ENCODE measurements at regions of chr10 and their contacts with region 1.

Region 1: GRCh38 chr10:87734987-87735827 is 75.5 kb downstream of the PAPSS2 start:
- DNase-seq: no peak
- H3K4me3 ChIP-seq: no peak overlapping the region
- H3K27ac ChIP-seq: peak overlapping the region; percentile 20
- H3K4me1 ChIP-seq: no peaks in the 10 kb centered on the region
- H3K27me3 ChIP-seq: no peaks in the 10 kb centered on the region
- CTCF ChIP-seq: peak; percentile 28 to 77 (median 51)
- POLR2A ChIP-seq: no peak

Region 2: DNA sequence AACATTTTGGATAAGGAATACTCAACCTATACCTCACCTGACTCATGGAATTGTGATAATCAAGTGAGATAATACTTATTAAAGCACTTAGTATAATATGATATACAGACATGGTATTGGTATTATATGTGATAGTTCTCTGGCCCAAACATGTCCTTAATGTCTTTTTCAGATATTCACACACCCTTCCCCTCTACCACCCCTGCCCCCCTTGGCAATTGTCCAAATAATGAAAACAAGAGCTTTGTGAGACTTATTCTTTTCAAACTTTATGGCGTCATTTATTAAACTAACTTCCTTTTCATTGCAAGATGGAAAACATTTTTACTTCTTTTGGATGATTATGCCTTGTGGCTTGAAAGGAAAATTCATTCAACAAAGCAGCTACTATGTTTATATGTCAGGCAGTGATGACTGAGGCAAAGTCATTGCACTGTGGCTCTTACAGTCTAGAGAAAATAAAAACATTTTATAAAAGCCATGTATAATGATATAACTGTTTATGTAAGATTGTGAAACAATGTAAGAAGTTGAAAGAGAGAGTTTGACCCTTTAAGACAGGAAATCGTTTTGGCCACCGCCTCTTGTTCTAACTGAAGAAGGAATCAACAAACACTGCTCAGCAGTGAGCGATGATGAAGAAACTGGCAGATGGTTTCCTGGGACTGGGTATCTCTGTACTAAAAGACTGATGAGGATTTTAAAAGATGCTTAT is 203.1 kb before region 1 on chr10:
- intact Hi-C with region 1: loop called (anchors 10 kb)
- DNase-seq: no peak
- H3K4me3 ChIP-seq: no peak overlapping the region
- H3K27ac ChIP-seq: peak overlapping the region; percentile 62
- H3K4me1 ChIP-seq: no peaks in the 10 kb centered on the region
- H3K27me3 ChIP-seq: no peaks in the 10 kb centered on the region
- CTCF ChIP-seq: no peak
- POLR2A ChIP-seq: no peak

Region 3: DNA sequence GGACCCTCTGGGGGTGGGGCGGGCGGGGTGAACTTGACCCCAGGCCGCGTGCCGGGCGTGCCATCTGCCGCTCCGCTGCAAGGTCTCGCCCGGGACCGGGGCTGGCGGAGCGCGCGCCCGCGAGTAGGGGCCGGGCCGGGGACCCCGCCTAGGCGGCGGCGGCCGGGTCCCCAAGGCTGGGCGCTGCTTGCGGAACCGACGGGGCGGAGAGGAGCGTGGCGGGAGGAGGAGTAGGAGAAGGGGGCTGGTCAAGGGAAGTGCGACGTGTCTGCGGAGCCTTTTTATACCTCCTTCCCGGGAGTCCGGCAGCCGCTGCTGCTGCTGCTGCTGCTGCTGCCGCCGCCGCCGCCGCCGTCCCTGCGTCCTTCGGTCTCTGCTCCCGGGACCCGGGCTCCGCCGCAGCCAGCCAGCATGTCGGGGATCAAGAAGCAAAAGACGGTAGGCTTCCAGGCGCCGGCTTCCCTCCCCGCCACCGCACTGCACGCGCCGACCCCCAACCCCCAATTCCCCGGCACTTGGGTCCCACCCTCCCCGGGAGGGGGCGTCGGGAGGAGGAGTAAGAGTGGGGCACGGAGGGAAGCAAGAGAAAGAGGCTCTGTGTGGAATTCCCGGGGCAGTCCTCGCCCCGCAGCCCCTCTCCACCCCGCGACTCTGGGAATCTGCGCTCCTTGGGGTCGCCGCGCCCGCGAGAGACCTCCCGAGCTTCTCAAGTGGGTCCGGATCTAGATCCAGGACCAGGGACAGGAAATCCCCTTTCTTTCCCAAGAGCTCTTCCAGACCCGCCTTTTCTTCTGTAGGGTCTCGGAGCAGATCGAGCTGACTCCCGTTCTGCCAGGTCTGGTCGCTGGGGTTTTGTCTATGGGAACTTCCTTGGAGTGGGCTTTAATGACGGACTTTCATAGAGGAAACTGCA is 75.4 kb before region 1 on chr10 and contains the start of gene PAPSS2:
- intact Hi-C with region 1: loop called (anchors 10 kb)
- DNase-seq: no peak
- H3K4me3 ChIP-seq: peak within 1 kb of the TSS; percentile 62 to 74
- H3K27ac ChIP-seq: peak within 1 kb of the TSS; percentile 90
- H3K4me1 ChIP-seq: peaks cover 18% of the 10 kb centered on the region
- H3K27me3 ChIP-seq: no peaks in the 10 kb centered on the region
- CTCF ChIP-seq: no peak
- POLR2A ChIP-seq: peak in 1 of 2 donors; percentile 12
- total RNA-seq, gene PAPSS2: 12.3 TPM

Measured in vagina (tissue), 2 donors.